Adrenal gland (tissue), 19 donors: ENCODE measurements at regions of chr9 and their contacts with region 1.

Region 1: DNA sequence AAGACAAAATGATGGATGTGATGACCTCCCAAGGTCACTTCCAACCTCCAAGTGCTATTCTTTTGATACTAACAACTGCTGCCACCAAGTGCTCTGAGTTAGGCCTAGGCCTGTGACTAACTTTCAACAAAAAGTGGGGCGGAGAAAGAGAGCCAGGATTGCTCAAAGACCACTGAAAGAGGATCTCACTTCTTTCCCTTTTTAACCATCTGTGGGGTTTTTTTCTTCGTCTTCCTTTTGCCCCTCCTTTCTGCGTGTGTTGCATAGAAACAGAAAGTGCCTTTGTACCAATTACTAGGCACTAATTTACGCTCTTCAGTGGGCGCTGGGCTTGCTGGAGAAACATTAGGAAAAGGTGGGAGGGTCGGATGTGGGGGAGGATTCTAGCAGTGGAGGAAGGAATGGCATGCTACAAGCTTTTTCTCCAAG is 8.0 kb downstream of the KLF9 start:
- DNase-seq: peak in 1 of 7 donors; percentile 40
- H3K4me3 ChIP-seq: peak overlapping the region in 1 of 4 donors; percentile 2
- H3K27ac ChIP-seq: peak overlapping the region; percentile 16 to 72 (median 45)
- H3K4me1 ChIP-seq: peaks cover 57 to 93% of the 10 kb centered on the region in 2 donors
- H3K27me3 ChIP-seq: no peaks in the 10 kb centered on the region
- CTCF ChIP-seq: no peak
- POLR2A ChIP-seq: no peak

Region 2: GRCh38 chr9:70352802-70353201 is 53.6 kb before region 1 on chr9:
- intact Hi-C with region 1: loop called (anchors 10 kb)
- DNase-seq: no peak
- H3K4me3 ChIP-seq: no peak overlapping the region
- H3K27ac ChIP-seq: no peak overlapping the region
- H3K4me1 ChIP-seq: peaks cover 0 to 9% of the 10 kb centered on the region in 2 donors
- H3K27me3 ChIP-seq: no peaks in the 10 kb centered on the region
- CTCF ChIP-seq: peak; percentile 29 to 76 (median 59)
- POLR2A ChIP-seq: no peak